ENCODE measurements at regions of chr12 and their contacts with region 1.

Region 1: GRCh38 chr12:40104461-40105264 is 1.2 kb downstream of the SLC2A13 start:
- DNase-seq: no peak
- H3K4me3 ChIP-seq: peak overlapping the region; percentile 58
- CTCF ChIP-seq: no peak

Region 2: DNA sequence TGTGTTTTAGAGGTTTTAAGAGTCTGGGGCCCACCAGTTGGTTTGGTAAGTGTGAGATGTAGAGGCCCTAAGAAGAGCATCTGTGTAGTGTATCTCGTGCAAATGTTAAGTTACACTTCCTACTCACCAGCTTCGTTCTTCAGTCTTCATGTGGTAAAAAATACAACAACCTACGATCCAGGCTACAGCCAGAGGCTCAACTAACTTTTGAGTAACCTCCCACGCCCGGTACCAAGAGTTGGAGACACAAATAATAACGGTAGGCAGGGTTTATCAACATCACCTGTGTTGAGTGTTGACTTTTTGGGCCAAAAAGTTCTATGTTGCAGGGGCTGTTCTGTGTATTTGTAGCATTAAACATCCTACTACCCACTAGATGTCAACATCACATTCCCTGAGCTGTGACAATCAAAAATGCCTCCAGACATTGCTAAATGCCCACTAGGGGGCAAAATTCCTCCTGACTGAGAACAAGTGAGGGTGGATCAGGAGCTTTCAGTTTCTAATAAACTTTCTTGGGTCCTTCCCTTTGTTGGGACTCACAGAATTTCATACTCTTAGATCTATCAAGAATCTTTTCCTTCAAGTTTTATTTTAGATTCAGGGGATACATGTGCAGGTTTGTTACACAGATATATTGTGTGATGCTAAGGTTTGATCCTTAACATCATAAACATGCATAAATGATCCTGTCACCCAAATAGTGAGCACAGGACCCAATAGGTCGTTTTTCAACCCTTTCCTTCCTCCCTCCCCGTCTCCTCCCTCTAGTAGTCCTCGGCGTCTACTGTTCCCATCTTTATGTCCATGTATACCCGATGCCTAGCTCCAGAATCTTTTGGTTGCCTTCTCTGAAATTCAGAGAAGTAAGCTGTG is 93.5 kb before region 1 on chr12:
- in situ Hi-C with region 1: loop called (anchors 5 kb)
- DNase-seq: peak; percentile 60
- H3K4me3 ChIP-seq: no peak overlapping the region
- CTCF ChIP-seq: peak; percentile 86

Region 3: GRCh38 chr12:40063414-40063813 is 41.2 kb before region 1 on chr12:
- in situ Hi-C with region 1: no loop called
- DNase-seq: no peak
- H3K4me3 ChIP-seq: no peak overlapping the region
- CTCF ChIP-seq: no peak

Measured in astrocyte of the cerebellum (primary cell).